ENCODE measurements at regions of chr13 and their contacts with region 1.

Region 1: DNA sequence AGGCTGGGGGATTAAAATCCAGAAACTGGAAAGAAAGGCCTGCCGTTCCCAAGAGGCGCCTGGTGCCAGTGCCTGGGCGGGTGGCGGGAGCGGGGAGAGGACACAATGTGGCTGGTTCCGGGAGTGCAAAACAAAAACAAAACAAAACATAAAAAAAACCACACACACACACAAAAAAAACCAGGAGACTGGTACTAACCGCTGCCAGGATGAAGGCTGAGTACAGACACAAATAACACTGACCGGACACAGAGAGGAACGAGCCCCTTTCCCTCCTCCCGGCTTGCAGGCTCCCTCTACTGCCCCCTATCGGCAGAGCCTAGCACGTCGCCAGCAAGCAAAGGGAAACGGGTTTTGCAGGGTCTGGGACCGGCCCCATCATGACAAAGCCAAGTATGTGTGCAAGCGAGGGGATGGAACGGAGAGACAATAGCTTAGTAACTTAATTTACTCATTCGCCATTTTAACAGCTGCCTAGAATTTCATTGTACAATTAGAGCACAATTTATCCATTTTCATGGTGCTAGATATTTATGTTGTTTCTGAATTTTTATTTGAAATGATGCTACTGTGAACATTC is 17.9 kb upstream of the ZDHHC20 start:
- DNase-seq: peak; percentile 79
- H3K4me3 Mint-ChIP-seq: peak overlapping the region; percentile 75
- H3K27ac Mint-ChIP-seq: peak overlapping the region; percentile 52
- H3K4me1 Mint-ChIP-seq: peaks cover 16% of the 10 kb centered on the region
- H3K27me3 Mint-ChIP-seq: no peaks in the 10 kb centered on the region
- CTCF ChIP-seq: peak; percentile 87

Region 2: DNA sequence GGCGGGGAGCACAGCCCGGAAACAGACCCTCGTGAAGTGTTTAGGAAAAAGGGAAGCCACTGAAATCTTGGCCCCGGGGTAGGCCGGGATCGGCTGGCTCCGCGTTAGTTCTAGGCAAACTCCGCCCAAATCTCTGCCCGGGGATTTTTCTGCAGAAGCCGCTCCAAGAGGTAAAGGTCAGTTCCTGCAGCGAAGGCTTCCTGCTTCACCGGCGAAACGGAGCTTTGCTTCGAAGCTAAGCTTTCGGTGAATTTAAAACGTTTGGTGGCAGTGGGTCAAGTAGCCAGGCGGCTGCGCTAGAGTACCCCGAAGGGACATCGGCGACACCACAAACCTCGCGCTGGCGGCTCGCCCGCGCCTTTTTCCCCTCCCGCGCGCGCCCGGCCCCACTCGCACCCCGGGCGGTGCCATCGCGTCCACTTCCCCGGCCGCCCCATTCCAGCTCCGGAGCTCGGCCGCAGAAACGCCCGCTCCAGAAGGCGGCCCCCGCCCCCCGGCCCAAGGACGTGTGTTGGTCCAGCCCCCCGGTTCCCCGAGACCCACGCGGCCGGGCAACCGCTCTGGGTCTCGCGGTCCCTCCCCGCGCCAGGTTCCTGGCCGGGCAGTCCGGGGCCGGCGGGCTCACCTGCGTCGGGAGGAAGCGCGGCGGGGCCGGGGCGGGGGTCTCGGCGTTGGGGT is 1284.7 kb before region 1 on chr13:
- CTCF ChIA-PET with region 1: interaction called, 5 read pairs
- POLR2A ChIA-PET with region 1: no interaction called
- intact Hi-C with region 1: loop called (anchors 5 kb)
- DNase-seq: peak; percentile 55
- H3K4me3 Mint-ChIP-seq: peak overlapping the region; percentile 74
- H3K27ac Mint-ChIP-seq: no peak overlapping the region
- H3K4me1 Mint-ChIP-seq: peaks cover 35% of the 10 kb centered on the region
- H3K27me3 Mint-ChIP-seq: no peaks in the 10 kb centered on the region
- CTCF ChIP-seq: no peak

Region 3: GRCh38 chr13:21106089-21106488 is 370.9 kb before region 1 on chr13:
- CTCF ChIA-PET with region 1: interaction called, 6 read pairs
- POLR2A ChIA-PET with region 1: no interaction called
- intact Hi-C with region 1: loop called (anchors 1 kb)
- DNase-seq: no peak
- H3K4me3 Mint-ChIP-seq: no peak overlapping the region
- H3K27ac Mint-ChIP-seq: peak overlapping the region; percentile 31
- H3K4me1 Mint-ChIP-seq: peaks cover 6% of the 10 kb centered on the region
- H3K27me3 Mint-ChIP-seq: no peaks in the 10 kb centered on the region
- CTCF ChIP-seq: no peak

Region 4: DNA sequence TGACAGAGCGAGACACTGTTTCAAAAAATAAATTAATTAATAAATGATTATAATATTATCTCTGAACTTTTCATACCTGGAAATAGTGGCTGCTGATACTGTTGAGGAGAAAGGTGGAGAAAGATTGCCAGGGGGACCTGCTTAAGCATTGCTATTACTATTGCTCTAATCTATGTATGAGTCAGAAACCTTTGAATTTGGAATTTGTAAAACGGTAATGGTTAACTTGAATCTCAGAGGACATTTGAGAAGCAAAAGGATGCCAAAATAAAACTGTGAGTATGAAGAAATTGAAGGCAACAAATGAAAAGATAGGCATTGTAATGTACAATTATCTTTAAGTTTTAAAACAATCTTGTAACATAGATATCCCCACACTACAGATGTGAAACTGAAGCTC is 295.3 kb before region 1 on chr13:
- CTCF ChIA-PET with region 1: interaction called, 12 read pairs
- POLR2A ChIA-PET with region 1: interaction called, 4 read pairs
- intact Hi-C with region 1: loop called (anchors 5 kb)
- DNase-seq: no peak
- H3K4me3 Mint-ChIP-seq: no peak overlapping the region
- H3K27ac Mint-ChIP-seq: no peak overlapping the region
- H3K4me1 Mint-ChIP-seq: no peaks in the 10 kb centered on the region
- H3K27me3 Mint-ChIP-seq: no peaks in the 10 kb centered on the region
- CTCF ChIP-seq: no peak

Region 5: DNA sequence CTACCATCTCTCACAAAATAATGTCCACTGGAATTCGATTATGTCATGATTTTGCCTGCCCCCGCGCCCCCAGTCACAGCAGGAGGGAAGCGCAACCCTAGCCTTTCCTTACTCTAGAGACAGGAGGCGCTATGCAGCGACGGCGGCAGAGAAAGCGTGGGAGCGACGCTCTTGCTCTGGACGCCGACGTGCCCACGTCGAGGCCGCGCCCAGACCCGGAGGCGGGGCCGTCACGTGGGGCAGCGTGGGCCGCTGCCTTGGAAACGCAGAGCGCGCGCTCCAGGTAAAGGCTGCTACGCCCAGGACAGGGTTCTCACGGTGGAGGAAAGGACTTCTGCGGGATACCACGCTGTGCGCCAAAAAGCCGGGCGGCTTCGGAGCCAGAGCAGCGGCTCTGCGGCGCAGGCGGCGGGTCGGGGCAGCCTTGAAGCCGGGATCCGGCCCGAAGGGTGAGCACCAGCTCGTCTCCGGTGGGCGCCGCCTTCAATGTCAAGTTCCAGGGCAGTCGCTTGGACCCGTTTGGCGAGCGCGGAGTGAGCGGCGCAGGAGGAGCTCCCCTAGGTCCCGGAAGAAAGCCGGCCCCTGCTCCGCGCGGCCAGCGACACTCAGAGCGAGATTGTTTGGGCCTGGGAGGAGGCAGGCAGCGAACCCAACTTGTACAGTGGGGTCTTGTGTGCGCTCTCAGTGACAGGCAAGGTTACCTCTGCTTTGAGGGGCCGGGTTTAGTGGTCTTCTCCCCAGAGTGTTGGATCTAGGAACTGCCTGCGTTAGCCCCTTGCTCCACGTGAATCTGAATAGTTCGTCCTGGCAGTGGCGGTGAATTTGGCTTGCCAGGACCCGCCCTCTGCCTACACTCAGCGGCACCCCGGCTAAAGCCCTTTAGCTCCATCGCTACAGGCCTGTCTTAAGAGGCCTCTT is 178.8 kb before region 1 on chr13:
- CTCF ChIA-PET with region 1: interaction called, 92 read pairs
- POLR2A ChIA-PET with region 1: interaction called, 33 read pairs
- intact Hi-C with region 1: loop called (anchors 1 kb)
- DNase-seq: peak; percentile 91
- H3K4me3 Mint-ChIP-seq: peak overlapping the region; percentile 88
- H3K27ac Mint-ChIP-seq: peak overlapping the region; percentile 82
- H3K4me1 Mint-ChIP-seq: peaks cover 7% of the 10 kb centered on the region
- H3K27me3 Mint-ChIP-seq: no peaks in the 10 kb centered on the region
- CTCF ChIP-seq: peak; percentile 83

Region 6: GRCh38 chr13:21338156-21338555 is 138.8 kb before region 1 on chr13:
- CTCF ChIA-PET with region 1: interaction called, 3 read pairs
- POLR2A ChIA-PET with region 1: no interaction called
- intact Hi-C with region 1: loop called (anchors 5 kb)
- DNase-seq: no peak
- H3K4me3 Mint-ChIP-seq: no peak overlapping the region
- H3K27ac Mint-ChIP-seq: no peak overlapping the region
- H3K4me1 Mint-ChIP-seq: no peaks in the 10 kb centered on the region
- H3K27me3 Mint-ChIP-seq: no peaks in the 10 kb centered on the region
- CTCF ChIP-seq: no peak

Region 7: GRCh38 chr13:21465710-21466160 is 11.2 kb before region 1 on chr13:
- CTCF ChIA-PET with region 1: interaction called, 29 read pairs
- POLR2A ChIA-PET with region 1: no interaction called
- intact Hi-C with region 1: no loop called
- DNase-seq: no peak
- H3K4me3 Mint-ChIP-seq: no peak overlapping the region
- H3K27ac Mint-ChIP-seq: no peak overlapping the region
- H3K4me1 Mint-ChIP-seq: no peaks in the 10 kb centered on the region
- H3K27me3 Mint-ChIP-seq: no peaks in the 10 kb centered on the region
- CTCF ChIP-seq: no peak

Measured in MCF 10A (cell line).